AG04450 (cell line): ENCODE measurements at regions of chr20 and their contacts with region 1.

Region 1: DNA sequence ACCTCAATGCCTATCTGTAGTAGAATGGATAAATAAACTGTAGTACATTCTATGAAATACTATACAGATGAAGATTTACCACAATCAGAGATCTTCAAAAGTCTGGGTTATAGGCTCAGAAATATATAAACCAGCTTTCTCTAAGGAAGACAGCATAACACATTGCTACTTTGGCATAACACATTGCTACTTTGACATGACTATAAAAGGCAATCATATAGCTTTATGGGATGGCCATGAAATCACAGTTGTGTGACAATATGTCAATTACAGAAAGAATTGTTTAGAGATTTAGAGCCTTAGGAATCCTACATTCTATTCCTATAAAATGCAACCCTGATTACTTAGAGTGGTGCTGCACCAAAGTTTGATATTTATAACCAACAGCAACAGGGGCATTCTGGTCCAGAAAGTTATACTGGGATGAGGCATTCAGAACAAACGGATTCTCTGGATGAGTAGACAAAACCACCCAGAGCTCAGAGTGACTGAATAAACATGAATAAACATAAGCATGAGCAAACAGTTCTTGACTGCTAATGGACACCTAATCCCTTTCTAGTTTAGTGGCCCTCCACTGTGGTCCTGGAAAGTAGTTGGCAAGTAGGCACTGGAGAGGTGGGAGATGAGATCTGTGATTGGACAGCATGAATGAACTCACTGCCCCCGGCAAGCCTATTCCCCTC is 12.0 kb downstream of the TTI1 start:
- DNase-seq: no peak
- H3K4me3 ChIP-seq: no peak overlapping the region
- H3K27ac ChIP-seq: no peak overlapping the region
- H3K27me3 ChIP-seq: no peaks in the 10 kb centered on the region
- CTCF ChIP-seq: no peak

Region 2: GRCh38 chr20:37990571-37991151 is 30.6 kb before region 1 on chr20:
- CTCF ChIA-PET with region 1: interaction called, 10 read pairs
- POLR2A ChIA-PET with region 1: interaction called, 3 read pairs
- DNase-seq: peak; percentile 59
- H3K4me3 ChIP-seq: no peak overlapping the region
- H3K27ac ChIP-seq: no peak overlapping the region
- H3K27me3 ChIP-seq: no peaks in the 10 kb centered on the region
- CTCF ChIP-seq: no peak

Region 3: GRCh38 chr20:38007526-38007925 is 13.7 kb before region 1 on chr20:
- CTCF ChIA-PET with region 1: no interaction called
- POLR2A ChIA-PET with region 1: no interaction called
- DNase-seq: no peak
- H3K4me3 ChIP-seq: no peak overlapping the region
- H3K27ac ChIP-seq: no peak overlapping the region
- H3K27me3 ChIP-seq: no peaks in the 10 kb centered on the region
- CTCF ChIP-seq: no peak

Region 4: GRCh38 chr20:38057351-38057972 is 36.2 kb after region 1 on chr20:
- CTCF ChIA-PET with region 1: no interaction called
- POLR2A ChIA-PET with region 1: no interaction called
- DNase-seq: no peak
- H3K4me3 ChIP-seq: no peak overlapping the region
- H3K27ac ChIP-seq: no peak overlapping the region
- H3K27me3 ChIP-seq: no peaks in the 10 kb centered on the region
- CTCF ChIP-seq: peak; percentile 86